ENCODE measurements at regions of chr4 and their contacts with region 1.

Region 1: GRCh38 chr4:166202991-166203390 is 330.0 kb downstream of the TLL1 start:
- DNase-seq: no peak
- H3K4me3 ChIP-seq: no peak overlapping the region
- H3K27ac ChIP-seq: no peak overlapping the region
- H3K27me3 ChIP-seq: no peaks in the 10 kb centered on the region
- CTCF ChIP-seq: no peak

Region 2: DNA sequence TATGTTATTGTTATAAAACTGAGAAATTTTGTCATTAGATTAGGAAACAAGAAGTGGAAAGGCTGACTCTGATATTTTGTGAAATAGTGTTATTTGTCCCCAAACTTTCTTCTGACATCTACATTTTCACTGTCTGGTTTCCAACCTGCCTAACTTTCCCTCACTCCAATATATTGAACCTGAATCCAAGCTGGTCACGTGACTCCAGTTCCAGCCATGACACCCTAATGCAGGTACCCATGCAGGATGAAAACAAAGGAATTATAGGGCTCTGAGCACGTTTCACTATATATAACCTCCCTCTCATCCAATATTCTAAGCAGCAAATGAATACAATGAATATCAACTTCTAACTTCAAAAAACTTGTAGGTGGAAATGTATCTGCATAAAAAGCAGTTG is 98.4 kb before region 1 on chr4:
- intact Hi-C with region 1: no loop called
- DNase-seq: no peak
- H3K4me3 ChIP-seq: no peak overlapping the region
- H3K27ac ChIP-seq: no peak overlapping the region
- H3K27me3 ChIP-seq: peaks cover 0 to 3% (median 0%) of the 10 kb centered on the region in 45 donors
- CTCF ChIP-seq: no peak

Region 3: DNA sequence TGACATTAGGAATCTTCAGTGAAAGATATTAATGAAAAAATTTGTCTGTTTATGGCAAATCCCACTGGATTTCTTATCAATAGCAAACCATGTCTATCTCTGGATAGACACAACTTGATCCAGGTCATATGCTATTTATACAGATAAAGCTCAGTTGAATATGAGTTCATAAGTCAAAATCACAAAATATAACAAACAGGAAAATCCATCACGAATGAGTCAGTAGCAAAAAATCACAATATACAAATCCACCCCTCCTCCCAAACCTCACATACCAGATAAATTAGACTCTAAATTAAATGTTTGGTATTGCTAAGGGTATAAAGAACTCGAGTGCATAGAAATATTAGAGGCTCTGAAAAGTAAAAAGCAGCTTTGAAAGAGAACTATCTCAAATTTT is 90.6 kb after region 1 on chr4:
- intact Hi-C with region 1: no loop called
- DNase-seq: no peak
- H3K4me3 ChIP-seq: no peak overlapping the region
- H3K27ac ChIP-seq: no peak overlapping the region
- H3K27me3 ChIP-seq: no peaks in the 10 kb centered on the region
- CTCF ChIP-seq: no peak

Region 4: DNA sequence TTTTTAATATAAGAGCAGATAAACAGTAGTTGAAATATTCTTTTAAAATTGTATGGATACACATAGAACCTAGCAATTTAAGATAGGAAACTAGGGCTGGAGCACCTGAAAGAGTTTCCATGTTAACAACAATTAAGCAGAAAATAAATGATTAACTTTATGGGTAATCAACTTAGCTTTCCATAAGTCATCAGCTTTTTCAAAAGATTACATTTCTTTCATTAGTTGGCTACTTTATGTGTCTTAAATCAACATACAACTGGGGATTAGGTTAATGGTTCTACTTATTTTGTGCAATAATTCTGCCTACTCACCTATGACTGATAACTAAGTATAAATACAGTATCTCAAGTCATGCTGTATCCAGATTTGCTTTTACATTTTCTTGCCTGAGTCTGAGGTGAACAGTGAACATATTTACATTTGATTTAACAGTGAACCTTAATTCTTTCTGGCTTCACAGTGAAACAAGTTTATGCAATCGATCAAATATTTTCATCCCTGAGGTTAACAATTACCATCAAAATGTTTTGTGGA is 1889.3 kb after region 1 on chr4 and contains the start of gene ANXA10:
- intact Hi-C with region 1: loop called in 1 of 2 experiments (anchors 5 kb)
- DNase-seq: no peak
- H3K4me3 ChIP-seq: no peak within 1 kb of the TSS
- H3K27ac ChIP-seq: no peak within 1 kb of the TSS
- H3K27me3 ChIP-seq: no peaks in the 10 kb centered on the region
- CTCF ChIP-seq: no peak
- total RNA-seq, gene ANXA10: 2.0 TPM in 1 of 120 experiments, not detected in the others